ENCODE measurements at regions of chr1 and their contacts with region 1.

Region 1: DNA sequence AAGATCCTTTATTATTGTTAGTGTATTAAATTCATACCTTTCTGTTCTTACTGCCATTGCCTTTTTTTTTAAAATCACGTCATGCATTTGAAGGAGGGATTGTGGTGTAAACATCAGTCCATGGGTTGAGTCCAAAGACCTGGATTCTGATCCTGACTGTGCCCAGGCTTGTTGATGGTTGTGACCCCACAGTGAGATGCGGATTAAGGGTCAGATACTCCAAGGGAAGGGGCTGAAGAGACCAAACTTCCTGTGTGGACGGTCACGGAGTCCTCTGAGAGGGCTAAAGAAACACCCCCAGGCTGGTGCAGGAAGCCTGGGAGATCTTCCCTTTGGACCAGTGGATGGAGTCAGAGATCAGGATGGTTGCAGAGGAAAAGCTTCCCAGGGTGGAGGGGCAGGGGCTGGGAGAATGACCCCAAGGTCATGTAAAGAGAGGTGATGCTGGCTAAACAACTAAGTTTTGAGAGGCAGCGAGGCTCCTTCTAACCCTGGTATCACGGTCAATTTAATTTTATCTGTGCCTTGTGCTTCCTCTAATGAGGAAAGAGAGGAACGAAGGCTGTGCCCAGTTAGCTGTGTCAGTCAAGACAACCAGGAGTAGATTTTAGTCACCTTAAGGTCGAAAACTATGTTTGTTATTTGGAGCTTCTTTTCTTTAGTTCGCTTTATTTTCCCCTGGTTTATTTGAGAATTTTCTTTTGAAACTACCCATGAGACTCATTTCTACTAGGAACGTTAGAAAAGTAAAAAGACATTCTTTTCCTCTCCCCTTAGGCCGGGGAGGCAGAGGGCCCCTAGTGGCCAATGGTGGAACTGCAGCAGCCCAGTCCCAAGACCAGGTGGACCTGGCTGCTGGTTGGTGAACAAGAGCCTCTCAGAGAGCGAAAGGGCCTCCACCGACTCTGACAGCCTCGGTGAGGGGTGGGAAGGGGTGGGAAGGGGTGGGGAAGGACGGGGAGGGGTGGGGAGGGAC is 8.7 kb upstream of the GPR161 start:
- DNase-seq: peak; percentile 90
- H3K4me3 Mint-ChIP-seq: no peak overlapping the region
- H3K27ac Mint-ChIP-seq: no peak overlapping the region
- H3K4me1 Mint-ChIP-seq: peaks cover 5% of the 10 kb centered on the region
- H3K27me3 Mint-ChIP-seq: no peaks in the 10 kb centered on the region
- CTCF ChIP-seq: peak; percentile 96

Region 2: GRCh38 chr1:168100315-168101002 is 45.0 kb before region 1 on chr1:
- CTCF ChIA-PET with region 1: interaction called, 16 read pairs
- POLR2A ChIA-PET with region 1: no interaction called
- intact Hi-C with region 1: no loop called
- DNase-seq: no peak
- H3K4me3 Mint-ChIP-seq: no peak overlapping the region
- H3K27ac Mint-ChIP-seq: no peak overlapping the region
- H3K4me1 Mint-ChIP-seq: peaks cover 9% of the 10 kb centered on the region
- H3K27me3 Mint-ChIP-seq: no peaks in the 10 kb centered on the region
- CTCF ChIP-seq: no peak

Region 3: GRCh38 chr1:168121401-168122011 is 24.0 kb before region 1 on chr1:
- CTCF ChIA-PET with region 1: interaction called, 42 read pairs
- POLR2A ChIA-PET with region 1: interaction called, 5 read pairs
- intact Hi-C with region 1: no loop called
- DNase-seq: peak; percentile 92
- H3K4me3 Mint-ChIP-seq: no peak overlapping the region
- H3K27ac Mint-ChIP-seq: no peak overlapping the region
- H3K4me1 Mint-ChIP-seq: peaks cover 39% of the 10 kb centered on the region
- H3K27me3 Mint-ChIP-seq: no peaks in the 10 kb centered on the region
- CTCF ChIP-seq: no peak

Region 4: GRCh38 chr1:168161459-168161858 is 16.0 kb after region 1 on chr1:
- CTCF ChIA-PET with region 1: interaction called, 21 read pairs
- POLR2A ChIA-PET with region 1: interaction called, 3 read pairs
- intact Hi-C with region 1: no loop called
- DNase-seq: no peak
- H3K4me3 Mint-ChIP-seq: no peak overlapping the region
- H3K27ac Mint-ChIP-seq: no peak overlapping the region
- H3K4me1 Mint-ChIP-seq: no peaks in the 10 kb centered on the region
- H3K27me3 Mint-ChIP-seq: no peaks in the 10 kb centered on the region
- CTCF ChIP-seq: no peak

Region 5: DNA sequence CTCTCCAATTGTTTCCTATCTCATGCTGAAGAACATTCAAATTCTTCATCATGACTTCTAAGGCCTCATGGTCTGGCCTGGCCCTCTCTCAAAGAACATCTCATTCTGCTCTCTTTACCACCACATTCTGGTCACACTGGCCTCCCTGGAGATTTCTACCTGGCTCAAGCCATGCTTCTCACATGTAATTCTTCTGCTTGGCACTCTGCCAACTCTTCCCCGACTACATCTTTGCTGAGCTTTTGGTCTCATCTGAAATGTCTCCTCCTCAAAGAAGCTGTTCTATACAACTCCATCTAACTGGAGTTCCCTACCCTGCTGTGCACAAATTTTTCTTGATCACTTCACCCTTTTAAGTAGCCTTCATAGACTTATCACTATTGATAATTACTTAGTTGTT is 133.8 kb after region 1 on chr1:
- CTCF ChIA-PET with region 1: no interaction called
- POLR2A ChIA-PET with region 1: no interaction called
- intact Hi-C with region 1: no loop called
- DNase-seq: no peak
- H3K4me3 Mint-ChIP-seq: no peak overlapping the region
- H3K27ac Mint-ChIP-seq: no peak overlapping the region
- H3K4me1 Mint-ChIP-seq: no peaks in the 10 kb centered on the region
- H3K27me3 Mint-ChIP-seq: no peaks in the 10 kb centered on the region
- CTCF ChIP-seq: no peak

Region 6: GRCh38 chr1:168488138-168488537 is 342.7 kb after region 1 on chr1:
- CTCF ChIA-PET with region 1: no interaction called
- POLR2A ChIA-PET with region 1: no interaction called
- intact Hi-C with region 1: no loop called
- DNase-seq: peak; percentile 72
- H3K4me3 Mint-ChIP-seq: no peak overlapping the region
- H3K27ac Mint-ChIP-seq: no peak overlapping the region
- H3K4me1 Mint-ChIP-seq: peaks cover 20% of the 10 kb centered on the region
- H3K27me3 Mint-ChIP-seq: no peaks in the 10 kb centered on the region
- CTCF ChIP-seq: no peak

Region 7: DNA sequence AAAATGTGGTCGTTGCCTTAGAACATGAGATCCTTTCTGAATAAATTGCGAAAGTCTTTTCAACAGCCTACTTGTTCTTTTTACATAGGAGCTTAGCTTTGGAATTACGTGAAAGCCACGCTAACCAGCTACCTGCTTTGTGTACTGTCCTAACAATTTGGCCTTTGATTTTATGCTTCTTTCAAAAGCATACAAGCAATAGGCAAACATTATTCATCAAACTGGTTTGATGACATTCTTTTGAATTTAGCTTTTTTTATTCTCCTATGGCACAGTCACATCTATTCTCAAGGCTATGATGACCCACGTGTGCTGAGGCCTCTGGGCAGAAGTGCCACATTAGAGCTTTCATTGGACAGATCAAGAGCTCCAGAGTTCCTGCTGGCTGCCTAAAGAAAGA is 761.6 kb after region 1 on chr1:
- CTCF ChIA-PET with region 1: no interaction called
- POLR2A ChIA-PET with region 1: no interaction called
- intact Hi-C with region 1: no loop called
- DNase-seq: no peak
- H3K4me3 Mint-ChIP-seq: no peak overlapping the region
- H3K27ac Mint-ChIP-seq: no peak overlapping the region
- H3K4me1 Mint-ChIP-seq: peaks cover 6% of the 10 kb centered on the region
- H3K27me3 Mint-ChIP-seq: no peaks in the 10 kb centered on the region
- CTCF ChIP-seq: no peak

Measured in MCF 10A (cell line).